Heart left ventricle (tissue), 16 donors: ENCODE measurements at regions of chr16 and their contacts with region 1.

Region 1: GRCh38 chr16:67883872-67884261 is 818 bp upstream of the NRN1L start:
- DNase-seq: peak; percentile 47 to 80 (median 49)
- ATAC-seq: peak in 3 of 4 donors; percentile 11 to 41 (median 38)
- H3K4me3 ChIP-seq: no peak overlapping the region
- H3K27ac ChIP-seq: peak overlapping the region in 11 of 12 donors; percentile 44 to 94 (median 81)
- H3K4me1 ChIP-seq: peaks cover 0 to 56% (median 32%) of the 10 kb centered on the region in 12 donors
- H3K27me3 ChIP-seq: no peaks in the 10 kb centered on the region
- CTCF ChIP-seq: peak; percentile 74 to 92 (median 83)
- POLR2A ChIP-seq: no peak

Region 2: DNA sequence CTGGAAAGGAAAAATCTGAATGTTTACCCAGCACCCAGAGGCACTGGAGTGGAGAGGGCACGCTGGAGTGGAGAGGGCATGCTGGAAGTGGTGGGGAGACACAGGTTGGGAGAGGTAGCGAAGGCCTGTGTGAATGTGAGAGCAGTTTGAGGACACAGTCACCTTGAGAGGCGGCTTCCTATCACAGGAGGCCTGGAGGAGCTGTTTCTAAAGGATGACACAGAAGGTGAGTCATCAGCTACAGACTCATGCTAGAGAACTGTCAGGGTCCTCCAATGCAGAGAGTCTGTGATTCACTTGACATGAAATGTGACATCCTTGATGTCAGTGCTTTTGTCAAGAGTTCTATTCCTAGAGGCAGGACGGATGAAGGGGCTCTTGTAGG is 34.0 kb after region 1 on chr16:
- intact Hi-C with region 1: no loop called
- DNase-seq: no peak
- ATAC-seq: peak in 3 of 4 donors; percentile 19 to 69 (median 40)
- H3K4me3 ChIP-seq: no peak overlapping the region
- H3K27ac ChIP-seq: peak overlapping the region in 11 of 12 donors; percentile 31 to 76 (median 64)
- H3K4me1 ChIP-seq: peaks cover 0 to 83% (median 51%) of the 10 kb centered on the region in 12 donors
- H3K27me3 ChIP-seq: no peaks in the 10 kb centered on the region
- CTCF ChIP-seq: no peak
- POLR2A ChIP-seq: no peak

Region 3: GRCh38 chr16:67928561-67929364 is 44.9 kb after region 1 on chr16:
- intact Hi-C with region 1: loop called in 9 of 10 experiments (anchors 2 to 5 kb)
- DNase-seq: peak; percentile 63 to 86 (median 73)
- ATAC-seq: peak; percentile 37 to 69 (median 62)
- H3K4me3 ChIP-seq: no peak overlapping the region
- H3K27ac ChIP-seq: no peak overlapping the region
- H3K4me1 ChIP-seq: peaks cover 0 to 34% (median 15%) of the 10 kb centered on the region in 12 donors
- H3K27me3 ChIP-seq: no peaks in the 10 kb centered on the region
- CTCF ChIP-seq: peak; percentile 72 to 87 (median 83)
- POLR2A ChIP-seq: no peak

Region 4: DNA sequence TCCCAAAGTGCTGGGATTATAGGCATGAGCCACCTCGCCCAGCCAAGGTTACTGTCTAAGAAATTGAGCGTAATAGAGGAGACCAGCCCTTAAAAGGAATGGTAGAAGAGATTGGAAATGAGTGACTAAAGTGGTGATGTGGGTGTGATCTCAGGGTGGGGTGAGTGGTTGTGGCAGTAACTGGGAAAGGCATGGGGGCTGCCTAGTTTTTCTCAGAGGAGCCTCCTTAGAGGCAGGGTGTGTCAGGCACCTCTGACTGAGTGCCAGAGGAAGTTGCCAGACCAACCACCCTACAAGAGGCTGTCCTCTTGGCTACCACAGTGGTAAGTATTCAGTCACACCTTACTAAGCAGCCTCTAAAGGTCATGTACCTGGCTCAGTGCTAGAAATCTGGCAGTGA is 148.1 kb after region 1 on chr16:
- intact Hi-C with region 1: loop called in 1 of 10 experiments (anchors 10 kb)
- DNase-seq: no peak
- ATAC-seq: no peak
- H3K4me3 ChIP-seq: no peak overlapping the region
- H3K27ac ChIP-seq: no peak overlapping the region
- H3K4me1 ChIP-seq: no peaks in the 10 kb centered on the region
- H3K27me3 ChIP-seq: no peaks in the 10 kb centered on the region
- CTCF ChIP-seq: no peak
- POLR2A ChIP-seq: no peak

Region 5: GRCh38 chr16:68085259-68086071 is 201.6 kb after region 1 on chr16 and contains the start of gene NFATC3:
- intact Hi-C with region 1: no loop called
- DNase-seq: peak; percentile 99
- ATAC-seq: peak; percentile 87 to 93 (median 90)
- H3K4me3 ChIP-seq: peak within 1 kb of the TSS; percentile 70 to 95 (median 88)
- H3K27ac ChIP-seq: peak within 1 kb of the TSS; percentile 96 to 99 (median 98)
- H3K4me1 ChIP-seq: peaks cover 0 to 78% (median 55%) of the 10 kb centered on the region in 12 donors
- H3K27me3 ChIP-seq: no peaks in the 10 kb centered on the region
- CTCF ChIP-seq: peak in 2 of 12 donors; percentile 16 to 29
- POLR2A ChIP-seq: peak in 1 of 2 donors; percentile 83
- total RNA-seq, gene NFATC3: 20.6 to 35.1 (median 28.8) TPM